Activated B cell treated with CpG ODN at 0.5 μM for 24 hours (primary cell): ENCODE measurements at regions of chr2 and their contacts with region 1.

Region 1: DNA sequence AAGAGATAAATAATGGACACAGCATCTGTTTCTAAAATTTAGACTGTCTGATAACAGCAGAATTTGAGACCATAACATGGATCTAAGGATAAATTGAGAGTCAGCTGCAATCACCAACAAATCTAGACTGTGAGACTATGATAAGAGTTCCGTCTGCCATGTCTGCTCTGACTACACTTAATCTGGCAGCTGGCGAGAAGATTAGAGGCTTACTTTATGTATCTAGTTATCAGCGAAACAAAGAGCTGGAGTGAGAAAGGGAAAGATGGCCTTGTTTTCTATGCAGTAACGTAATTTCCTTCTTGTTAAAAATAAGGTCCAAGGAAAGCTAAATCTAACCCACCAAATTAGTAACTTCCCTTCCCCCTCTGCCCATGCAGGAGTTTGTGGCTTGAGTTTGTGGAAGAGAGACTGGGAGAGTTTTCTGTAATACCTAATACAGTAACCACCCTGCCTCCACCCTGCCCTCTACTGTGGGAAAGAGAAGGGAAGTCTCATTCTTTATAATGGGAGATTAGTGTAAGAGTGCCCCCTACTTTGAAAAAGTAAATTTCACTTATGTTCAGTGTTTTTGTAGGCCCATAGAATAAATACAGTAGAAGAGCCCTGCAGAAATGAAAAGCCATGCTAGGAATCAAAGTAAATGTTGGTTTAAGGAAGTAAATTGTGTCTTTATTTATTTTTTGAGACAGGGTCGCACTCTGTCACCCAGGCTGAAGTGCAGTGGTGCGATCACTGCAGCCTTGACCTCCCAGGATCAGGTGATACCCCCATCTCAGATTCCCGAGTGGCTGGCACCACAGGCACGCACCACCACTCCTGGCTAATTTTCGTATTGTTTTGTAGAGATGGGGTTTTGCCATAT is 27.5 kb downstream of the EML4 start:
- DNase-seq: no peak
- ATAC-seq: peak; percentile 89
- H3K4me3 Mint-ChIP-seq: peak overlapping the region; percentile 15
- H3K27ac Mint-ChIP-seq: peak overlapping the region; percentile 50
- H3K4me1 Mint-ChIP-seq: peaks cover 77% of the 10 kb centered on the region
- H3K27me3 Mint-ChIP-seq: no peaks in the 10 kb centered on the region
- CTCF ChIP-seq: no peak

Region 2: GRCh38 chr2:41869542-41870264 is 326.9 kb before region 1 on chr2:
- CTCF ChIA-PET with region 1: interaction called, 7 read pairs
- POLR2A ChIA-PET with region 1: no interaction called
- intact Hi-C with region 1: loop called (anchors 1 kb)
- DNase-seq: peak; percentile 69
- ATAC-seq: peak; percentile 75
- H3K4me3 Mint-ChIP-seq: no peak overlapping the region
- H3K27ac Mint-ChIP-seq: no peak overlapping the region
- H3K4me1 Mint-ChIP-seq: no peaks in the 10 kb centered on the region
- H3K27me3 Mint-ChIP-seq: peaks cover 16% of the 10 kb centered on the region
- CTCF ChIP-seq: peak; percentile 55

Region 3: DNA sequence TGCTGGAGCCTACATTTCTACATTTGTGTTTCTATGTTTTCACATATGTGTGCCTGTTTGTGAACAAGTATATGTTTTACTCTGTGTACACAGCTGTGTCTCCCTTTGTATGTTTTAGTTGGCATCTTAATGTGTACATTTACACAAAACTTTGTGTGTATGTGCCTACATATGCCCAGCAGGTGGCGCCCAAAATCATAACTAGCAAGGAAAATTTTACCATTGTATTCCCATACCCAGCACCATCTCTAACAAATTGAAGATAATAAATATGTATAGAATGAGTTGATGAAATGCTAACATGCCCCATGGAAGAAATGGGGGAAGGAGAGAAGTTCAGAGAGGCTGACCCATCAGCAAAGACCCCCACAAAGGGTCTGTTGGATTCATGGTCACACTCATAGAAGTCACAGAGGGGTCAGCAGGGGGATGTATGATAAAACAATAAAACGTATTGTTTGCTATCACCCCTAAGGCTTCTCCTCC is 100.7 kb before region 1 on chr2:
- CTCF ChIA-PET with region 1: interaction called, 104 read pairs
- POLR2A ChIA-PET with region 1: interaction called, 3 read pairs
- intact Hi-C with region 1: loop called (anchors 1 kb)
- DNase-seq: peak; percentile 45
- ATAC-seq: peak; percentile 30
- H3K4me3 Mint-ChIP-seq: no peak overlapping the region
- H3K27ac Mint-ChIP-seq: no peak overlapping the region
- H3K4me1 Mint-ChIP-seq: peaks cover 49% of the 10 kb centered on the region
- H3K27me3 Mint-ChIP-seq: no peaks in the 10 kb centered on the region
- CTCF ChIP-seq: peak; percentile 31

Region 4: GRCh38 chr2:42132966-42133641 is 63.5 kb before region 1 on chr2:
- CTCF ChIA-PET with region 1: interaction called, 9 read pairs
- POLR2A ChIA-PET with region 1: no interaction called
- intact Hi-C with region 1: loop called (anchors 2 kb)
- DNase-seq: peak; percentile 57
- ATAC-seq: peak; percentile 93
- H3K4me3 Mint-ChIP-seq: peak overlapping the region; percentile 80
- H3K27ac Mint-ChIP-seq: peak overlapping the region; percentile 89
- H3K4me1 Mint-ChIP-seq: peaks cover 80% of the 10 kb centered on the region
- H3K27me3 Mint-ChIP-seq: no peaks in the 10 kb centered on the region
- CTCF ChIP-seq: no peak

Region 5: GRCh38 chr2:42238644-42239288 is 42.1 kb after region 1 on chr2:
- CTCF ChIA-PET with region 1: interaction called, 5 read pairs
- POLR2A ChIA-PET with region 1: no interaction called
- intact Hi-C with region 1: loop called (anchors 2 kb)
- DNase-seq: no peak
- ATAC-seq: peak; percentile 93
- H3K4me3 Mint-ChIP-seq: no peak overlapping the region
- H3K27ac Mint-ChIP-seq: no peak overlapping the region
- H3K4me1 Mint-ChIP-seq: peaks cover 82% of the 10 kb centered on the region
- H3K27me3 Mint-ChIP-seq: no peaks in the 10 kb centered on the region
- CTCF ChIP-seq: no peak

Region 6: DNA sequence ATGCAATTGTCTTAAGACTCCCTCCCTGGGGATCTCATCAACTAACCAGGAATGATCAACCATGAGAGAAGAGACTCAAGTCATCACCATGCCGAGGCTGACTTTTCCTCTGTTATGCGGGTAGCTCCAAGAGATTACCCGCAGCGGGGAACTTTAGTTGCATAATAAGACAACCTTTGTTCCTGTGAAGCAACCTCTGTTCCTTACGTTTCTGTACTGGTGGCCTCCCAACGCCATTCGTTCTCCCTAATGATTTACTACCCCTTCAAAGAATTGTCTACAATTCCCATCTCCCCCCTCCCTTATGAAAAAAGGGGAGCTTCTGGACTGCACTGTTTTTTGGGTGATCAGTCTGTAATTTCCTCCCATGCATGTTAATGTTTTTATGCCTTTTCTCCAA is 1865.2 kb after region 1 on chr2:
- CTCF ChIA-PET with region 1: no interaction called
- POLR2A ChIA-PET with region 1: no interaction called
- intact Hi-C with region 1: no loop called
- DNase-seq: no peak
- ATAC-seq: no peak
- H3K4me3 Mint-ChIP-seq: no peak overlapping the region
- H3K27ac Mint-ChIP-seq: no peak overlapping the region
- H3K4me1 Mint-ChIP-seq: no peaks in the 10 kb centered on the region
- H3K27me3 Mint-ChIP-seq: peaks cover 13% of the 10 kb centered on the region
- CTCF ChIP-seq: no peak